Posterior cingulate gyrus (tissue), 11 donors: ENCODE measurements at regions of chr2 and their contacts with region 1.

Region 1: GRCh38 chr2:222912117-222912516 is 51.3 kb downstream of the ACSL3 start:
- DNase-seq: no peak

Region 2: DNA sequence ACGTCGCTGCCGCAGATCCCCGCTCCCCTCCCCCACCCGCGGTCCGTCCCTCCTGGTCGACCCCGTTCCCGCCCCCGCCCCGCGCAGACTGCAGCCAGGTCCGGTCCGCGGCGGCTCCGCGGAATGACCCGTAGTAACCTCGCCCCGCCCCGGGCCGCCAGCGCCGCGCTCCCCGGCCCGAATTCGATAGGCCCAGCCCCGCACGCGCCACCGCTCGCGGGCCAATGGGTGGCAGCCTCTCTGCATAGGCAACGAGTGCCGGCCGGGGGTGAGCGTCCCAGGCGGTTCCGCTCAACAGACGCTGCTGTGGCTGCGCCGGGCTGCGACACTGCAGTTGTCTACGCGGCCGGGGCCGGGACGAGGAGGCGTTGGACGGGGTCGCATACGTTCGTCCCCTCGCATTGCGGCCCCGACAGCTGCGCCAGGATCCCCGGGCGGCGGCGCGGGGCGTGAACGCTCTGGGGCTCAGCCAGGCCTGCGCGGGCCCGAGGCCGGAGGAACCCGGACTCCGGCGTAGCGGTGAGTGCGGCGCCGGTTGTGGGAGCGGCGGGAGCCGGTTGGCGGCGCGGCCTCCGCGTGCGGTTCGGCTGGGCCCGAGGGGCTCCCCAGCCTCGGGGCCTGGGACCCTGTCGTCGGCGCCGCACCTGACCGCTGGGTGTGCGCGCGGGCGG is 51.2 kb before region 1 on chr2 and contains the start of gene ACSL3:
- intact Hi-C with region 1: loop called (anchors 2 kb)
- DNase-seq: peak; percentile 95 to 100 (median 98)

Region 3: GRCh38 chr2:222993920-222994650 is 82.0 kb after region 1 on chr2:
- intact Hi-C with region 1: no loop called
- DNase-seq: peak; percentile 69 to 96 (median 78)